ENCODE measurements at regions of chr5 and their contacts with region 1.

Region 1: GRCh38 chr5:59367791-59368394 is 525.6 kb downstream of the PDE4D start:
- DNase-seq: no peak
- H3K4me3 ChIP-seq: no peak overlapping the region
- H3K27me3 ChIP-seq: peaks cover 10% of the 10 kb centered on the region; the same call in 1 of the 2 replicates
- CTCF ChIP-seq: peak; percentile 83

Region 2: DNA sequence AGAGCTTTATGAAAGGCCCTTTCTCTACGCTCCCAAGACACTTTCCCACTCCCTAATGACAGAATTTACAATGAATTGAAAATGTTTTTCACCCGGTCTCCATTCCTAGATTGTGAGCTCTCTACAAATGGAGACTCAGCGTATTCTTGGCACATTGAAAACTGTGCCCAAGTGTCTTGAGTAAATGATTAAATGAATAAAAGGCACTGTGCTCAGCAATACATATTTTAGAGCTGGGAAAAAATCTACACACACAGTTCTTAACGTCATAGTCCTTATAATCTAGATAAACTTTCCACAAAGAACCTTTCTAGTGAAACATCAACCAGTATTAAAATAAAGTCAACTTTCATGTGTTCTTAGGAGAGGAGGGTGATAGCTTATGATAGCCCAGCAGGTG is 151.1 kb before region 1 on chr5:
- CTCF ChIA-PET with region 1: interaction called, 24 read pairs
- POLR2A ChIA-PET with region 1: no interaction called
- DNase-seq: no peak
- H3K4me3 ChIP-seq: no peak overlapping the region
- H3K27me3 ChIP-seq: peaks cover 4% of the 10 kb centered on the region; the same call in 1 of the 2 replicates
- CTCF ChIP-seq: no peak

Region 3: DNA sequence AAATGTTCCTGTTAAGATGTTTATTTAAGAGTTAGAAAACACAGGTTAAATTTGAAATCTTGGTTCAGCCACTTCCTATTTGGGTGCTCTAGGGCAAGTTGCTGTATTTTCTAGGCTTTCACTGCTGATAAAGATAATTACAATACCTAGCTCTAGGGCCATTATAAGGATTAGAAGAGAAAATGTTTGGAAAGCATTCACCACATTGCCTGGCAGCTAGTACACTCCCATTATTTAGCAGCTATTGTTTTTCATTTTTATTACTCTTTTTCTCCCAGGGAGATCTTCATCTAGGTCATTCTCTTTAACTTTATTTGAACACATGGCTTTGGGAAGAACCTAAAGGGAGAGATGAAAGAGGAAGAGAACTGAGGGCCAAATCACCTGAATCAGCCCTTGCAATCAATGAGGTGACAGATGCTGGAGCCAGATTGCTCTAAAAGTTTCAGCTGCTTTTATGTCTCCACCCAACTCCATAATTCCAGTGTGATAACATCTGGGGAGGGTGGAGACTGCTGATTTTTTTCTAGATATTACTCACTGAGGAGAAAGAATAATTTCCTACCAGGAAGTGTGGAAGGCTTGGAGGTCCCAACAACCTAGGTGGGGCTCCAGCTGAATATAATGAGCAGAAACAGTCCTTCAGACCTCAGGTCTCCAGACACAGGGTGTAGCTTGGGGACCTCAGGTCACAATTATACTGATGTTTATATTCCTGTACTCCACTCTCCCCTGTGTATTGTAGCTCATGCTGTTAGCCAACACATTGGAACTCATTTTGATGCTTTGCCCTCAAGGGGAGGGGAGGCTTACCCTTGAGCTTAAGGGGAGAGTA is 145.0 kb before region 1 on chr5:
- CTCF ChIA-PET with region 1: interaction called, 24 read pairs
- POLR2A ChIA-PET with region 1: no interaction called
- DNase-seq: no peak
- H3K4me3 ChIP-seq: no peak overlapping the region
- H3K27me3 ChIP-seq: no peaks in the 10 kb centered on the region; the same call in 1 of the 2 replicates
- CTCF ChIP-seq: no peak

Region 4: GRCh38 chr5:59356813-59357380 is 11.0 kb before region 1 on chr5:
- CTCF ChIA-PET with region 1: interaction called, 14 read pairs
- POLR2A ChIA-PET with region 1: no interaction called
- DNase-seq: no peak
- H3K4me3 ChIP-seq: no peak overlapping the region
- H3K27me3 ChIP-seq: peaks cover 6% of the 10 kb centered on the region
- CTCF ChIP-seq: no peak

Region 5: GRCh38 chr5:59380350-59380951 is 12.6 kb after region 1 on chr5:
- CTCF ChIA-PET with region 1: interaction called, 10 read pairs
- POLR2A ChIA-PET with region 1: no interaction called
- DNase-seq: peak; percentile 62
- H3K4me3 ChIP-seq: no peak overlapping the region
- H3K27me3 ChIP-seq: peaks cover 2% of the 10 kb centered on the region; the same call in 1 of the 2 replicates
- CTCF ChIP-seq: peak; percentile 48